GM10248 (cell line): ENCODE measurements at regions of chr1 and their contacts with region 1.

Region 1: GRCh38 chr1:169119405-169119804 is 12.9 kb downstream of the ATP1B1 start:
- DNase-seq: no peak
- CTCF ChIP-seq: no peak

Region 2: DNA sequence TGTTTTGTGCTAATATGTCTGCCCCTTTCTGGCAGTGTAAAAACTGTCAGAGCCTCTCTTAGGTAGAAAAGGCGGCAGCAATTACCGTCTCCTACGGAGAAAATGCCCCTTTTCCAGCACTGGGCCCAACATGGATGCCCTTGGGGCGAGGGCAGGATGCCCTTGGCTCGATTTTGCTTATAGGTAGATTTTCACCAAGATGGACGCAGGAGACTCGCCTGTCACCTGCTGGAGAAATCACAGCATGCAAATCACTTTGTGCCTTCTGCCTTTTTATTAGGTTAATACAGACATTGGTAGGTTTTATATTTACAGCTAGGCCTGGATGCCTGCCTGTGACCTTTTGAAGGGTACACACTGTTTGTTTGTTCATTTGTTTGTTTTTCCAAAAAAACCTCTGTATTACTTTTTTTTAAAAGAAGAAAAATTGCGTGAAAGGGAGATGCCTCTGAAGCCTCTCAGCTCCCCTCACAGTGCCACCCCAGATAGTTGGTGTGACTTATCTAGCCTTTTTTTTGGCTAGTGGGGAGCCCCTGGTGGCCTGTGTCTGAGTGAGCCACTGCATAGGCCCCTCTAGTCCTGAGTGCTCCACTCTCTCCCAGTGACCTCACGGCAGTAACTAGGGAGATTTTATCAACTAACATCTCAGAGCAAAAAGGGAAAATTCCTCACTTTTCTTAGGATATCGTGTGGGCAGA is 10.4 kb before region 1 on chr1:
- CTCF ChIA-PET with region 1: interaction called, 12 read pairs
- POLR2A ChIA-PET with region 1: interaction called, 3 read pairs
- DNase-seq: peak; percentile 45
- CTCF ChIP-seq: peak; percentile 59

Region 3: GRCh38 chr1:169133801-169134502 is 14.5 kb after region 1 on chr1:
- CTCF ChIA-PET with region 1: interaction called, 7 read pairs
- POLR2A ChIA-PET with region 1: interaction called, 11 read pairs
- DNase-seq: no peak
- CTCF ChIP-seq: peak; percentile 40